ENCODE measurements at regions of chr19 and their contacts with region 1.

Region 1: GRCh38 chr19:11019824-11020223 is 59.0 kb downstream of the SMARCA4 start:
- DNase-seq: no peak
- ATAC-seq: no peak
- H3K4me3 ChIP-seq: no peak overlapping the region
- H3K27ac ChIP-seq: no peak overlapping the region
- H3K4me1 ChIP-seq: no peaks in the 10 kb centered on the region
- H3K27me3 ChIP-seq: no peaks in the 10 kb centered on the region
- CTCF ChIP-seq: no peak

Region 2: GRCh38 chr19:10936661-10937084 is 83.2 kb before region 1 on chr19:
- intact Hi-C with region 1: loop called in 1 of 2 experiments (anchors 10 kb)
- DNase-seq: peak in 2 of 4 donors; percentile 69 to 86
- ATAC-seq: peak; percentile 80
- H3K4me3 ChIP-seq: no peak overlapping the region
- H3K27ac ChIP-seq: no peak overlapping the region
- H3K4me1 ChIP-seq: peaks cover 0 to 13% of the 10 kb centered on the region in 2 donors
- H3K27me3 ChIP-seq: no peaks in the 10 kb centered on the region
- CTCF ChIP-seq: peak; percentile 34 to 54

Region 3: DNA sequence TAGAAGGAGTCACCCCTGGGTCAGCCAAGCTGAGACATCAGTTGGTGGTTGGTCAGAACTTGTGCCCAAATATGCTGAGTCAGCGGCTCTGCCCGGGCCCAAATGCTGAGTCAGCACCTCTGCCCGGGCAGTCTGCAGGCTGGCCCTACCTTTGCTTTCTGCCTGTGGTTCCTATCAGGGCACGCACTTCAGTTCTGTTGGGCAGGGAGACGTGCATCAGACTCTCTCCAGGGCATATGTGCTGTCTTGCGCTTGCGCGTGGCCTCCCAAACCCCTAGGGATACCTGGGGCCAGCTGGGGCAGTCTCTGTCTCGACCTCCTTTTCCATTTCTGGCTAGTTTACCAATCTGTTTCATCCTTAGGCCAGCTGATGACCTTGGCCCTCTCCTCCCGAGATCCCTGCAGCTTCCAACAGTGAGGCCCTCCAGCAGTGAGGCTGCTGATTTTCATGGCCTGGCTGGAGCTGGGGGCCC is 45.0 kb after region 1 on chr19:
- intact Hi-C with region 1: no loop called
- DNase-seq: peak in 1 of 4 donors; percentile 75
- ATAC-seq: no peak
- H3K4me3 ChIP-seq: no peak overlapping the region
- H3K27ac ChIP-seq: no peak overlapping the region
- H3K4me1 ChIP-seq: peaks cover 0 to 11% of the 10 kb centered on the region in 2 donors
- H3K27me3 ChIP-seq: no peaks in the 10 kb centered on the region
- CTCF ChIP-seq: no peak